ENCODE measurements at regions of chr5 and their contacts with region 1.

Region 1: DNA sequence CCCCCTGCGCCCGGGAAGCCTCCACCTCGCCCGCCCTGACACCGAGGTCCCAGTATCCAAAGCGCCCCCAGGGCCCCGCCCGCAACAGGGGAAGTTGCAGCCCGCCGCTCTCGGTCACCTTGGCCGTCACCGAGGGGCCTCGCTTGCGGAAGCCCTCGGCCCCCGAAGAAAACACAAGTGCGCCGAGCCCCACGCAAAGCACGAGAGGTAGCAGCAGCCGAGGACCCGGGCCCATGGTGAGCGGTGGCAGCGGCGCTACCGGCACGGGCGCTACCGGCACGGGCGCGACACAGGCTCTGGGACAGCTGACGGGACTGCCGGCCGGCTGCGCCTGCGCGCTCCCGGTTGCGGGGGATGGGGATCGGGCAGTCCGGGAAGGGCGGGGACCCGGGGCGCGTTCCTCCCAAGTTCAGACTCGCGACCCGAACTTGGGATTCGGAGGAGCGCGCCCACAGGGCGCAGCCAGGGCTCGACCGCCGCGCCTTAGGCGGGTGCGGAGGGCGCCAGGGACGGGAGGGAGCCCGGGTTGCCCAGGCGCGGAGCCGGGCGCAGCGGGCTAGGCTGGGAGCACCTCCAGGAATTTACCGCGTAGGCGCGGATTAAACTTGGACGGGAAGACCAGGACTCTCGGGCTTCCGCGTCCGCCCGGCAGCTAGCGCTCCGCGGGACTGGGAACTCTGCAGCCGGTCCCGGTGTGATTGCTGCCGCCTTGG is at the start of gene PPIC:
- DNase-seq: peak; percentile 89 to 91
- ATAC-seq: peak; percentile 93
- total RNA-seq, gene PPIC: 79.8 to 86.0 TPM

Region 2: GRCh38 chr5:122715095-122715494 is 321.5 kb before region 1 on chr5:
- intact Hi-C with region 1: no loop called
- DNase-seq: no peak
- ATAC-seq: no peak

Region 3: DNA sequence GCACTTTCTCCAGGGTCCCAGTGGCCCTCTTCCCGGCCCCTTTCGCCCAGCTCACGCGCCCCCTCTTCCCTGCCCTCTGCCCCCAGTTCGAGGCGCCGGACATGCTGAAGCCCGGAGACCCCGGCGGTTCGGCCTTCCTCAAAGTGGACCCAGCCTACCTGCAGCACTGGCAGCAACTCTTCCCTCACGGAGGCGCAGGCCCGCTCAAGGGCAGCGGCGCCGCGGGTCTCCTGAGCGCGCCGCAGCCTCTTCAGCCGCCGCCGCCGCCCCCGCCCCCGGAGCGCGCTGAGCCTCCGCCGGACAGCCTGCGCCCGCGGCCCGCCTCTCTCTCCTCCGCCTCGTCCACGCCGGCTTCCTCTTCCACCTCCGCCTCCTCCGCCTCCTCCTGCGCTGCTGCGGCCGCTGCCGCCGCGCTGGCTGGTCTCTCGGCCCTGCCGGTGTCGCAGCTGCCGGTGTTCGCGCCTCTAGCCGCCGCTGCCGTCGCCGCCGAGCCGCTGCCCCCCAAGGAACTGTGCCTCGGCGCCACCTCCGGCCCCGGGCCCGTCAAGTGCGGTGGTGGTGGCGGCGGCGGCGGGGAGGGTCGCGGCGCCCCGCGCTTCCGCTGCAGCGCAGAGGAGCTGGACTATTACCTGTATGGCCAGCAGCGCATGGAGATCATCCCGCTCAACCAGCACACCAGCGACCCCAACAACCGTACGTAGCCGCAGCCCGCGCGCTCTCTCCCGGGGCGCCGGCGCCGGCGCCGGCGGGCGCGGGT is 53.5 kb after region 1 on chr5:
- intact Hi-C with region 1: loop called in 1 of 2 experiments (anchors 5 kb)
- DNase-seq: peak in 1 of 2 donors; percentile 28
- ATAC-seq: peak; percentile 71

Measured in left colon (tissue), 2 donors.